ENCODE measurements at regions of chr9 and their contacts with region 1.

Region 1: GRCh38 chr9:109914280-109915027 is 134.5 kb downstream of the PALM2AKAP2 start:
- DNase-seq: no peak
- ATAC-seq: no peak

Region 2: DNA sequence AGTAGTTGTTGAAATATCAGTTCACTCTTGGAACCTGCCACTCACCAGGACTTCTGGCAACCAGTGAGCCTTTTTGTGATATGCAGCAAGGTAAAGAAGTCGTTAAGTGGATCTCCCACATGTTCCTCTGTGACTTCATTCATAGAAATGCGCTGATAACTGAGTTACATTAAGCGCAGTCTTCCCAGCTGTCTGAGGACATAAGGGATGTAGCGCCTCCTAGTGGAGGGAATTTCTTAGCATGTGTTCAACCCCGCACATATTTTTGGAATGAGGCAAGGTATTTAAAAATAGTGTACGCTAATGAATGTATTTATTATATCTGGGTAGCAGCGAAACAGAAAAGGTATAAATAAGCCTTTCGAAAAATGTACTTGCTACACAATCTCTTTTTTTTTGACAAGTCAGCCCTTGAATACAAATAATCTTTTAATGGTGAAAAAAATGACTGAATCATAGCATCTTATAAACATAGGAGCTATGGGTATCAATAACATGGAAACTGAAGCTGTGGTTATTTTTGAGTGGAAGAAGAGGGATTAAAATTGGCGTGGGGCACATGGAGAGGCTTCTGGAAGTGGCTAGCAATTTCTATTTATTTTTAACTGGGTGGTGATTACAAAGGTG is 96.5 kb before region 1 on chr9:
- intact Hi-C with region 1: no loop called
- DNase-seq: peak; percentile 78
- ATAC-seq: peak; percentile 82 to 86

Region 3: GRCh38 chr9:109856785-109857184 is 57.7 kb before region 1 on chr9:
- intact Hi-C with region 1: no loop called
- DNase-seq: peak; percentile 79
- ATAC-seq: peak; percentile 98

Region 4: GRCh38 chr9:110048403-110048975 is 134.0 kb after region 1 on chr9:
- intact Hi-C with region 1: loop called in 1 of 2 experiments (anchors 5 kb)
- DNase-seq: peak; percentile 87
- ATAC-seq: peak; percentile 94 to 97

Measured in left cardiac atrium (tissue), 4 donors.